ENCODE measurements at regions of chr21 and their contacts with region 1.

Region 1: GRCh38 chr21:23401278-23401677 is 2206.0 kb downstream of the MRPL39 start:
- DNase-seq: no peak

Region 2: DNA sequence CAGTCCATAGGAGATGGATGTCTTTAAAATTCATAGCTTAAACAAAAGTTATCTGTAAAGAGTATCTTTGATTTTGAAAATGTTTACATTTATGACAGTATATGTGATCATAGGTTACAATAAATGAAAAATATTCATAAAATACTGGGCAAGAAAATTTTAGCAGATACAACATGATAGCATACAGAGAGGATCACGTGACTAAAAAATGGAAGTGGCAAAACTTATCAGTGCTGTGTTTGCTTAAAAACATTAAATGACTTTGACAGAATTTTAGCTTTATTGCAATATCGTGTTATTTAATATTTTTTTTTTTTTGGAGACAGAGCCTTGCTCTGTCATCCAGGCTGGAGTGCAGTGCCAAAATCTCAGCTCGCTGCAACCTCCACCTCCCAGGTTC is 109.0 kb before region 1 on chr21:
- intact Hi-C with region 1: no loop called
- DNase-seq: no peak

Region 3: DNA sequence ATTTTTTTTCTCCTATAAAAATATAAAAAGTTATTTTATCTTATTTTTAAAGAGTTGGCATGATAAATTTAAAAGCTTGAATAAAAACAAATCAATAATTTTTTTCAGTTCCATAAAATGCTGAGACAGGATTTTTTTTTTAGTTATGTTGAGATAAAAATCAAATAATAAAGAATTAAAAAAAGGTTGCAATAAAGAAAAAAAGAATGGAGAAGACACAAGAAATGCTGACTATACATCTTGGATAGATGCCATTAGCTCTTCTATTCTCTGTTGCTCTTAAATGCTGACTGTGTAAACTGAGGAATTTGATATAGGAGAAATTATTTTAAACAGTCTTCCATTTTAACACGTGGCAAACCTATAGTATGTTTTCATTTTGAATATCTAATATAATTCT is 92.5 kb before region 1 on chr21:
- intact Hi-C with region 1: loop called (anchors 10 kb)
- DNase-seq: no peak

Region 4: GRCh38 chr21:23543334-23543733 is 142.1 kb after region 1 on chr21:
- intact Hi-C with region 1: no loop called
- DNase-seq: no peak

Region 5: GRCh38 chr21:24323536-24323935 is 922.3 kb after region 1 on chr21:
- intact Hi-C with region 1: no loop called
- DNase-seq: no peak